ENCODE measurements at regions of chr6 and their contacts with region 1.

Region 1: DNA sequence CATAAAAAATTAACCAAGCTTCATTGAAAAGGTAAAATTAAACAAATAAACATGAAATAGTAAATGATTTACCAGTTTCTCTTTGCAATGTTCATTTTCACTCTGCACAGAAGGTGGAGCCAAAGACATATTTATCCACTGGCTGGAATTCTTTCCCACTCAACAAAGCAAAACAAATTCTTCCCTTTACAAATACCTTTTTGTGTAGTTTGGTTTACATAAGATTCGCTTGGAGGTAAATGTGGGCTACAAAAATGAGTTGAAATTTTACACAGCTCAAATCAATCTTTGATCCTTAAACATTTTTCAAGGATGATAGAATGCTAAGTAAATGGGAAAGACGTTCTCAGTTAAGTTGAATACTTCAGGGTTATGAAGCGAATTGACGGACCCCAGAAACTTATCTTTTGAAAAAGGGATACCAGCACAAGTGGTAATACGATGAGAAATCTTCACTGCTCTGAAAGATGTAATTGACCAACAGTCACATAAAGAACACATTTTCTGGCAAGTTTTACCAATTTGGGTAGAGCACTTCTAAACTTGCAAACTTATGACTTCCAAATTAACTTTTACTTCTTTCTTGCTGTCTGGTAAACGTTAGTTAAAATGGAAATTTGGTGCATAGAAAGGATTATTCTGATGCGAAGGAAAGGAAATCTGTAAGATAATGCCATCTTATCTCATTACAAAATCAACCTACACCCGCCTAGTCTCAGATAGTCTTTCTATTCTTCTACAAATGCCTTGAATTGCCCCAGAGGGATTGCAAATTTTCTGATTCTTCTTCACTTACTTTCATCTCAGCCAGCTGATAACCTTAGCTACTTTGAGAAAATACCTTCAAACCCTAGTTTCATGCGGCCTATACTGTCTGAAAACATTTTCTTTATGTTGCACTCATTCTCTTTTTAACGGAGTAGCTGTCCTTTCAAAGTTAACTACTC is 4.7 kb upstream of the GJA1 start:
- DNase-seq: peak; percentile 54
- ATAC-seq: 0 out of 2 replicates have a peak, but pooled peaks have one; percentile 41
- H3K4me3 ChIP-seq: no peak overlapping the region
- H3K27ac ChIP-seq: no peak overlapping the region
- H3K4me1 ChIP-seq: peaks cover 2% of the 10 kb centered on the region; the same call in 1 of the 2 replicates
- H3K27me3 ChIP-seq: no peaks in the 10 kb centered on the region
- CTCF ChIP-seq: peak; percentile 94
- POLR2A ChIP-seq: no peak; the same call in 1 of the 2 replicates
- RAD21 ChIP-seq: peak; percentile 97

Region 2: GRCh38 chr6:121593011-121593690 is 162.4 kb after region 1 on chr6:
- CTCF ChIA-PET with region 1: no interaction called
- POLR2A ChIA-PET with region 1: no interaction called
- dilution Hi-C with region 1: no loop called
- in situ Hi-C with region 1: loop called (anchors 10 kb)
- intact Hi-C with region 1: no loop called
- DNase-seq: peak; percentile 11
- ATAC-seq: 0 out of 2 replicates have a peak, but pooled peaks have one; percentile 33
- H3K4me3 ChIP-seq: no peak overlapping the region
- H3K27ac ChIP-seq: peak overlapping the region; percentile 68
- H3K4me1 ChIP-seq: peaks cover 7% of the 10 kb centered on the region; the same call in 1 of the 2 replicates
- H3K27me3 ChIP-seq: no peaks in the 10 kb centered on the region
- CTCF ChIP-seq: no peak
- POLR2A ChIP-seq: no peak
- RAD21 ChIP-seq: no peak

Region 3: DNA sequence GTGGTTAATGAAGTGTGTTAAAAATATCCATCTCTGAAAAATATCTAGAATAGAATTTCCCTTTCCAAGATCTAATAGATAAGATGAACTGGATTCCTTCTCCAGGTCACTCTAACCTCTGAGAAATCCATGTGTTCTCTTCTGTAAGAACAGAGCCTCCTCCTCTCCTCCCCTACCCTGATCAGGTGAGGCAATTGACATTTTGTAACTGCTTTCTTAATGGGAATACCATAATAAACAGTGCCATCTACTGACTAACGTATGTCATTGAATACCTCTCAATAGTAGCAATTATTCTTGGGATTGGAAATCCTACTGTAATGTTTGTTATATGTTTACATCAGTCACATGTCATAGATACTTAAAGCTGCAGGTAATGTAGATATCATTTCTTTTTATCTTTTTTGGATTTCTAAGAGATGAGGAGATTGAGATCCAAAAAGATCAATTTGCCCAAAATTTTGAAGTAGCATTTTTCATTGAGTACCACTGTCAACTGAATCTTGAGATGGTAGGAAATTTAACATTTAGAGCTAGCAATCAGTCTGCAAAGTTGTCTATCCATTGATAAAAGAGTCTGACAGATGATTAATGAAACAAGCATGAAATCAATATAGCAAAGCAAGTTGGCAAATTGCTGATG is 602.9 kb after region 1 on chr6:
- CTCF ChIA-PET with region 1: interaction called, 6 read pairs
- POLR2A ChIA-PET with region 1: no interaction called
- dilution Hi-C with region 1: no loop called
- in situ Hi-C with region 1: no loop called
- intact Hi-C with region 1: loop called (anchors 1 kb)
- DNase-seq: peak; percentile 70
- ATAC-seq: peak; percentile 88
- H3K4me3 ChIP-seq: no peak overlapping the region
- H3K27ac ChIP-seq: no peak overlapping the region
- H3K4me1 ChIP-seq: no peaks in the 10 kb centered on the region
- H3K27me3 ChIP-seq: no peaks in the 10 kb centered on the region
- CTCF ChIP-seq: peak; percentile 76
- POLR2A ChIP-seq: no peak
- RAD21 ChIP-seq: peak; percentile 89

Region 4: DNA sequence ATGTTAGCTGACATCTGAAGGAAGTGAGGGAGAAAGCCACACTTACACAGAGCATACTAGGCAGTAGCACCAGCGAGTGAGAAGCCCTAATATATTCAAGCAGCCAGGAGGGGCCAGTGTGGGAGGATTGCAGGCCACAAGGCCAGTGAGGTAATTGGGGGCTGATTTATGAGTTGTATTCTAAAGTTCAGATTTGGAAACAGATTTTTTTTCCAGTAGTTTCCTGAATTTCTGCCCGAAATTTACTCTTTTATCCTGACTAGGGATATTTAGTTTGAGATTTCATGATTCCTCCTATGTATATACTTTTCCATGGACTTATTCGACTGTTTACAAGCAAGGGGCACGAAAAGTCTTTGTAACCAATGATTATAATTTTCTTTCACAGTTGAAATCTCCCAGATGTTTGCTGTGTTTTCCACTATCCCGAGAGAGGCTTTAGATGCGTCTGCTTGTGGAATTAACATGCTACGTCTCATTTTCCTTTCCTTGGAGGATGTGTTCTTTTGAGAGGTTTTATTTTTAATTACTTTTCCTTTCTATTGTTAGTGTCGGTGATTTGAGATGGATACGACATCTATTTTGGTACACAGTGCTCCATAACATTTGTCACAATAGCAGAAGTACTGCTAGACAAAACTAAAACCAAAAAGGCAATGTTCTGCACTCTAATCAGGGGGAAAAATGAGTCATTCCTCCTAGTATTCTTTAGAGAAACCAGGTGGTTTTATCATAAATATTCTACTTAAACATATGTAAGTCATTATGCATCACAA is 612.4 kb after region 1 on chr6:
- CTCF ChIA-PET with region 1: no interaction called
- POLR2A ChIA-PET with region 1: no interaction called
- dilution Hi-C with region 1: no loop called
- in situ Hi-C with region 1: loop called (anchors 5 kb)
- intact Hi-C with region 1: no loop called
- DNase-seq: peak; percentile 36
- ATAC-seq: peak; percentile 46; the same call in 1 of the 2 replicates
- H3K4me3 ChIP-seq: no peak overlapping the region
- H3K27ac ChIP-seq: no peak overlapping the region
- H3K4me1 ChIP-seq: peaks cover 3% of the 10 kb centered on the region; the same call in 1 of the 2 replicates
- H3K27me3 ChIP-seq: no peaks in the 10 kb centered on the region
- CTCF ChIP-seq: no peak
- POLR2A ChIP-seq: no peak
- RAD21 ChIP-seq: no peak

Region 5: DNA sequence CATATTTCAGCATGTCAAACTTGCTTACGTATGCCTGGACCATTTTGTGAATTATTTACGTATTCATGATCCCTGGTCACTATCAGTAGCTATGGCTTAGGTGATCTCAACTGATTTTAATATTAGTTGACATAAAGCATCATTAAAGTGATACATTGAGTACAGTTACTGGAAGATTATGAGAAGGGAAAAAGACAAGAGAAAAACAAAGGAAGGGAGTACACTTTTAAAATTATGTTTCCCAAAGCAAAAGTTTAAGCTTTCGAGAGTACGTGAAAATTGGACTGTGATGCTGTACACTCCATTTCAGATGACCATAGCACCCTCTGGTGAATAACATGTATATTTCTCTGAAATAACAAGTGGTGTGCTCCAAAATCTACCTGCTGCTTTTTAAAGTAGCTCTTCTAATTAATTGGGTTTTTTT is 753.6 kb after region 1 on chr6:
- CTCF ChIA-PET with region 1: interaction called, 7 read pairs
- POLR2A ChIA-PET with region 1: interaction called, 3 read pairs
- dilution Hi-C with region 1: no loop called
- in situ Hi-C with region 1: no loop called
- intact Hi-C with region 1: loop called (anchors 1 kb)
- DNase-seq: peak; percentile 47
- ATAC-seq: peak; percentile 84
- H3K4me3 ChIP-seq: peak overlapping the region; percentile 3; the same call in 1 of the 2 replicates
- H3K27ac ChIP-seq: no peak overlapping the region
- H3K4me1 ChIP-seq: no peaks in the 10 kb centered on the region
- H3K27me3 ChIP-seq: no peaks in the 10 kb centered on the region
- CTCF ChIP-seq: peak; percentile 64
- POLR2A ChIP-seq: no peak
- RAD21 ChIP-seq: peak; percentile 79

Region 6: GRCh38 chr6:122289762-122290539 is 859.2 kb after region 1 on chr6:
- CTCF ChIA-PET with region 1: no interaction called
- POLR2A ChIA-PET with region 1: no interaction called
- dilution Hi-C with region 1: no loop called
- in situ Hi-C with region 1: no loop called
- intact Hi-C with region 1: loop called (anchors 2 kb)
- DNase-seq: peak; percentile 7
- ATAC-seq: no peak
- H3K4me3 ChIP-seq: no peak overlapping the region
- H3K27ac ChIP-seq: no peak overlapping the region
- H3K4me1 ChIP-seq: no peaks in the 10 kb centered on the region
- H3K27me3 ChIP-seq: no peaks in the 10 kb centered on the region
- CTCF ChIP-seq: 0 out of 2 replicates have a peak, but pooled peaks have one; percentile 21
- POLR2A ChIP-seq: no peak
- RAD21 ChIP-seq: peak; percentile 28; the same call in 1 of the 2 replicates

Region 7: GRCh38 chr6:122372647-122373046 is 941.9 kb after region 1 on chr6:
- CTCF ChIA-PET with region 1: no interaction called
- POLR2A ChIA-PET with region 1: no interaction called
- dilution Hi-C with region 1: no loop called
- in situ Hi-C with region 1: no loop called
- intact Hi-C with region 1: loop called (anchors 1 kb)
- DNase-seq: peak; percentile 6
- ATAC-seq: no peak
- H3K4me3 ChIP-seq: no peak overlapping the region
- H3K27ac ChIP-seq: no peak overlapping the region
- H3K4me1 ChIP-seq: no peaks in the 10 kb centered on the region
- H3K27me3 ChIP-seq: no peaks in the 10 kb centered on the region
- CTCF ChIP-seq: peak; percentile 21; the same call in 1 of the 2 replicates
- POLR2A ChIP-seq: no peak
- RAD21 ChIP-seq: 0 out of 2 replicates have a peak, but pooled peaks have one; percentile 21

Measured in IMR-90 (cell line).